ENCODE measurements at regions of chr1 and their contacts with region 1.

Region 1: GRCh38 chr1:211476200-211476849 is 15.6 kb downstream of the RD3 start:
- DNase-seq: peak; percentile 36
- H3K4me3 ChIP-seq: no peak overlapping the region
- H3K27ac ChIP-seq: no peak overlapping the region
- H3K4me1 ChIP-seq: no peaks in the 10 kb centered on the region
- H3K27me3 ChIP-seq: peaks cover 4% of the 10 kb centered on the region
- CTCF ChIP-seq: peak; percentile 90 to 96

Region 2: GRCh38 chr1:210407207-210407886 is 1069.0 kb before region 1 on chr1:
- CTCF ChIA-PET with region 1: no interaction called
- dilution Hi-C with region 1: no loop called
- in situ Hi-C with region 1: no loop called
- intact Hi-C with region 1: loop called (anchors 1 kb)
- DNase-seq: peak; percentile 50
- H3K4me3 ChIP-seq: no peak overlapping the region
- H3K27ac ChIP-seq: no peak overlapping the region
- H3K4me1 ChIP-seq: peaks cover 21% of the 10 kb centered on the region
- H3K27me3 ChIP-seq: no peaks in the 10 kb centered on the region
- CTCF ChIP-seq: peak; percentile 96 to 99

Region 3: GRCh38 chr1:211198111-211198510 is 278.2 kb before region 1 on chr1:
- CTCF ChIA-PET with region 1: no interaction called
- dilution Hi-C with region 1: no loop called
- in situ Hi-C with region 1: no loop called
- intact Hi-C with region 1: no loop called
- DNase-seq: peak; percentile 58
- H3K4me3 ChIP-seq: no peak overlapping the region
- H3K27ac ChIP-seq: peak overlapping the region; percentile 60
- H3K4me1 ChIP-seq: peaks cover 17% of the 10 kb centered on the region
- H3K27me3 ChIP-seq: no peaks in the 10 kb centered on the region
- CTCF ChIP-seq: no peak

Region 4: GRCh38 chr1:211280910-211281309 is 195.4 kb before region 1 on chr1:
- CTCF ChIA-PET with region 1: interaction called, 16 read pairs
- dilution Hi-C with region 1: no loop called
- in situ Hi-C with region 1: no loop called
- intact Hi-C with region 1: no loop called
- DNase-seq: no peak
- H3K4me3 ChIP-seq: no peak overlapping the region
- H3K27ac ChIP-seq: no peak overlapping the region
- H3K4me1 ChIP-seq: no peaks in the 10 kb centered on the region
- H3K27me3 ChIP-seq: no peaks in the 10 kb centered on the region
- CTCF ChIP-seq: no peak

Region 5: DNA sequence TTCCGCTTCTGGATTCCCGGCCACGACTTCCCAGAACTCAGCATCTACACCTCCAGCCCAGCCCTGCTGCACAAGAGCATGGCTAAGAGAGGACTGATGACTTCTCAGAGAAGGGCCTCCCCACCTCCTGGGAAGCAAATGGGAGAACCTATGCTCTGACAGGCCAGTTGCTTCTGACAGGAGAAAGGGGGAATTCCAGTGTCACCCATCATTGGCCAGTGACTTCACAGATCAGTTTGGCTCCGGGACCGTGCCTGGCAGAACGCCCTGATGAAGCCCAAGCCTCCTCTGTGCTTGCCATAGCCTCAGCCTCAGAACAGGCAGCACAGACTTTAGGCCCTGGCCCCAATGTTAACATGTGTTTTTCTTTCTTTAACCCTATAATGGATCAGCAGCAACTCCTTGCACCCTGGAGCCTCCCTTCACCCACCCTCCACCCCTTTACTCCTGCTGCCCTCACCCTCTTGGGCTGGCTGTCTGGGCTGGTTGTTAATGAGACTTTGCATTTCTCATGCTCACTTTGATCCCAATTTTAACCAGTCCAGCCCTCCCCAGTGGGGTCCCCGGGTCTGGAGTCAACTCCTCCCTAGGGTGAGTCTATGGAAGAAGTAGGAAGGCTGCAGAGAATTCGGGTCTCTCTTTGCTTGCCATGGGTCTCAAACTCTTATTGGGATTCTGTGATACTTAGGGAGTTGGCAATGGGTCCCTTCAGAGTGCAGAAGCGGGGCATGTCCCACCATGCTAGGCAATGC is 145.3 kb after region 1 on chr1:
- CTCF ChIA-PET with region 1: no interaction called
- dilution Hi-C with region 1: no loop called
- in situ Hi-C with region 1: no loop called
- intact Hi-C with region 1: no loop called
- DNase-seq: no peak
- H3K4me3 ChIP-seq: no peak overlapping the region
- H3K27ac ChIP-seq: no peak overlapping the region
- H3K4me1 ChIP-seq: no peaks in the 10 kb centered on the region
- H3K27me3 ChIP-seq: no peaks in the 10 kb centered on the region
- CTCF ChIP-seq: no peak

Region 6: GRCh38 chr1:211654838-211655787 is 178.8 kb after region 1 on chr1:
- CTCF ChIA-PET with region 1: no interaction called
- dilution Hi-C with region 1: loop called (anchors 10 kb)
- in situ Hi-C with region 1: no loop called
- intact Hi-C with region 1: loop called (anchors 2 kb)
- DNase-seq: peak; percentile 68
- H3K4me3 ChIP-seq: no peak overlapping the region
- H3K27ac ChIP-seq: no peak overlapping the region
- H3K4me1 ChIP-seq: peaks cover 13% of the 10 kb centered on the region
- H3K27me3 ChIP-seq: no peaks in the 10 kb centered on the region
- CTCF ChIP-seq: peak; percentile 86 to 97